PC-3 (cell line): ENCODE measurements at regions of chr4 and their contacts with region 1.

Region 1: GRCh38 chr4:168585168-168586091 is 88.6 kb downstream of the PALLD start:
- DNase-seq: peak; percentile 82
- ATAC-seq: peak; percentile 39
- H3K4me3 ChIP-seq: no peak overlapping the region
- H3K27ac ChIP-seq: peak overlapping the region; percentile 100
- H3K4me1 ChIP-seq: peaks cover 70% of the 10 kb centered on the region
- H3K27me3 ChIP-seq: no peaks in the 10 kb centered on the region
- CTCF ChIP-seq: peak; percentile 72

Region 2: DNA sequence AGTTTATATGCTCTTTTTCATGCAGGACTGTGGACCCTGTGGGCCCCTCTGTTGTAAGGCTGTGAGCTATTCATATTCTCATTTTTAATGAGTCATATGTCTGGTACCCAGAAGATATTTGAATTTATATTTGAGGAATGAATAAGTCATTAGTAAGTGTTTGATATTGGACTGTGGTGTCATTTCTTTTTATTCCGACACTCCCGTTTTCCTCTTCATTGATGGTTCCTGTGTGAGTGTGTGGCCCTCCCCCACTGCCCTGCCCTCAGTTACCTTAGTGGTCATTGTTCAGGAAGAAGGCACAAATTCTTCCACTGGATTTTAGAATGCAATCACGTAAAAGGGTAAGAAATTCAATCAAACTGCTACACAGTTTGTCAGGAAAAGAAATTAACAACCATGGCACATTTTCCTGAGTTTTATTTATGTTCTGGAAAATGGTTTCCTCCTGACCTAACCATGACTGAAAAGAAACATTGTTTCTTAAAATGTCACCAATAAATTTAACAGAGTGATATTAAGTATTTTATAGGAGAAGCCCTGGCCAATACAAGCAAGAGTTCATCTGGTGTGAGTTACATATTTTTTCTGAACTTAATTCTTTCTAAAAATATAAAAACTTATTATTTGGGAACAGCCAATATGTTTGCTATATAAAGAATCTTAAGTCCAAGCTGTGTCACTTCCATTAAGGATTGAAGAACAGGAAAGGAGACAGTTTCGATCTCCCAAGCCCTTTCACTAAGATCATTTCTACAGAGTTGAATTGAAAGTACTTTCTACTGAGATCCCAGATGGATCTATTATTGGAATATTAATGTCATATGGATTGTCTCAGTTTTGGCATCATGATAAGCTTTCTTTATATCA is 863.6 kb before region 1 on chr4:
- CTCF ChIA-PET with region 1: no interaction called
- POLR2A ChIA-PET with region 1: no interaction called
- intact Hi-C with region 1: no loop called
- DNase-seq: peak; percentile 64
- ATAC-seq: peak; percentile 95
- H3K4me3 ChIP-seq: no peak overlapping the region
- H3K27ac ChIP-seq: peak overlapping the region; percentile 49
- H3K4me1 ChIP-seq: peaks cover 17% of the 10 kb centered on the region
- H3K27me3 ChIP-seq: no peaks in the 10 kb centered on the region
- CTCF ChIP-seq: no peak

Region 3: GRCh38 chr4:168480931-168481611 is 104.4 kb before region 1 on chr4:
- CTCF ChIA-PET with region 1: no interaction called
- POLR2A ChIA-PET with region 1: interaction called, 3 read pairs
- intact Hi-C with region 1: loop called (anchors 2 kb)
- DNase-seq: peak; percentile 82
- ATAC-seq: peak; percentile 27
- H3K4me3 ChIP-seq: peak overlapping the region; percentile 89
- H3K27ac ChIP-seq: peak overlapping the region; percentile 94
- H3K4me1 ChIP-seq: peaks cover 54% of the 10 kb centered on the region
- H3K27me3 ChIP-seq: no peaks in the 10 kb centered on the region
- CTCF ChIP-seq: no peak

Region 4: DNA sequence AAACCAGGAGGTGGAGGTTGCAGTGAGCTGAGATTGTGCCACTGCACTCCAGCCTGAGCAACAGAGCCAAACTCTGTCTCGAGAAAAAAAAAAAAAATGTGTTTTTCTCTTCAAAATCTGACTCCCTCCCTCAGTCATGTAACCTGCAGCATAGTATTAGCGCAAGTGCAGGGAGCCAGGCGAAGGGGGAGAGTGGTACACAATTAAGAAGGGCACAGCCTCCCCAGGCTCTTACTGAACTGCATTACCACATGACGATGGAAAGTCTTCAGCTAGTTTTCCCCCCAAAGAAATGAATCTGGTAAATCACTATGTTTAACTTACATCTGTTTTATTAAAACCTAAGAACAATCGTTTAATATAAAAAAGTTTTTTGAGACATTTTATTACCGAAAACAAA is 56.2 kb before region 1 on chr4:
- CTCF ChIA-PET with region 1: no interaction called
- POLR2A ChIA-PET with region 1: no interaction called
- intact Hi-C with region 1: no loop called
- DNase-seq: no peak
- ATAC-seq: no peak
- H3K4me3 ChIP-seq: no peak overlapping the region
- H3K27ac ChIP-seq: no peak overlapping the region
- H3K4me1 ChIP-seq: peaks cover 18% of the 10 kb centered on the region
- H3K27me3 ChIP-seq: no peaks in the 10 kb centered on the region
- CTCF ChIP-seq: no peak

Region 5: DNA sequence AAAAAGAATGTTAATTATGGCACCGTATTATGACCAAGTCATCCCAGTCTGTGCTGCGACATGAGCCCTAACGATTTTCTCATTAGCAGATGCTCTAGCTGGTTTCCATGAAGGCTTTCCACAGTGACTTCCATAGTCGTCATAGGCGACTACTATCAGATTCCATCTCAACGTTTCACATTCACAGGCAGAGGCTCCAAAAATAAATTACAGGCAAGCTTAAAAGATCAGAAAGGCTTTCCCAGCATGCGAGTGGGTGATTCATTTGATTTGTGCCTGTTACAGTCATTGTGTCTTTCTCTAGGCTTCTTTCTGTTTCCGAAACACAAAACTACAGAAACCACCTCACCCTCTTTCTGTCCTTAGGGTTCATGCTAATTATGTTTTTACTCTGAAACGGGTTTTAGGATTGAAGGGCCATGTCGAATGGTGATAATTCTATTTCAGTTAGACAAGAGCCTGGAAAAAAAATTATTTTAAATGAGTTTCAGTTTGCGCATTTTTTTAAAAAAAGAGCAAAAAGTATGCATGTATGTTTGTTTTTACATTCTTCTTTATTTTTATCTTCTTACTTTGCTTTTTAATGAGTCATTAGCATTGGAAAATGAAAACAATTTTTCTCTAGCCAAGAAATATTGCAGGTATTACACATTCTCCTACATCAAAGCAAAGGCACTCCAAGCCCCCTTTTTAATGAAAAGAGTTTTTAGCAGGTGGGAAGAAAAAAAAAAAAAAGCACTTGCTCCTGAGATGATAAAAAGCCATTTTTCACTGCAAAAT is 45.2 kb before region 1 on chr4:
- CTCF ChIA-PET with region 1: no interaction called
- POLR2A ChIA-PET with region 1: no interaction called
- intact Hi-C with region 1: loop called (anchors 5 kb)
- DNase-seq: no peak
- ATAC-seq: no peak
- H3K4me3 ChIP-seq: 0 out of 2 replicates have a peak overlapping the region, but pooled peaks have one; percentile 10
- H3K27ac ChIP-seq: peak overlapping the region; percentile 84
- H3K4me1 ChIP-seq: peaks cover 52% of the 10 kb centered on the region
- H3K27me3 ChIP-seq: no peaks in the 10 kb centered on the region
- CTCF ChIP-seq: no peak

Region 6: DNA sequence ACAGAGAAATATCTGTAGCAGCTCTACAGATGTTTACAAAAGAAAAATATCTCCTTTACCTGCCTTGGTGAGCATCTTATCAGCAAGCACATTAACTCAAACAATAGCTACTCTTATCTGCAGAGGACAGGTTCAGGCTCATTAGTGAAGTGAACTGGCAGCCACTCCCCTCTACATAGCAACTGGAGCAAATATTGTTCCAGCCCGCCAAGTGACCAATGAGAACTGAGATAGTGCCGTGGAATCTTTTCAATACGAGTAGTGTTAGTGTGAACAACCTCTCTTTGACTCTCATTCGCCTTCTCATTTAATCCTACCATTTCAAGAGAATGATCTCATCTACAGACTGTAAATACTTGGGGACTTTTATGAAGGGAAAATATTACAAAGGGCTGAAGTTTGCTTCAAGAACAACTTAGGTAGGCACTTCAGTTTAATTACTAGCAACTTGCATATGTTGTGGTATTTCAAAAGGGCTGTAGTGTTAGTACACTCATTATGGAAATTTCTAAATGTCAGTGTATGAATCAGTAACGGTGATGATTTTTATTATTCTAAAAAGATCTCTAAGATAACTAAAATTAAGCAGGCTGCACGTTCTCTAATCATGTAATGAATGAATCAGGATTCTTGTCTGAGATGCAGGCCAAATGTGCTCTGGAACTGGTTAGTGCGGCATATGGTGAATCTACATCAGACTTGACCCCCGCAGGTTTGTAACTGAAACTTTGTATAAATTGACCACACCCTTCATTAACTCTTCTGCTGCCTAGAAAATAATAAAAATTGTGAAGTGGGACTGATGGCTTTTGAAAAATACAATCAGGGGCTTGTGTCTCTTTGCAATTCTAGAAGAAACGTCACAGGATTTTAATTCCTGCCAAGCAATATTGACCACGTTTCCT is 16.1 kb before region 1 on chr4:
- CTCF ChIA-PET with region 1: no interaction called
- POLR2A ChIA-PET with region 1: no interaction called
- intact Hi-C with region 1: no loop called
- DNase-seq: no peak
- ATAC-seq: peak; percentile 24; the same call in 1 of the 2 replicates
- H3K4me3 ChIP-seq: peak overlapping the region; percentile 17
- H3K27ac ChIP-seq: peak overlapping the region; percentile 11; the same call in 1 of the 2 replicates
- H3K4me1 ChIP-seq: peaks cover 30% of the 10 kb centered on the region
- H3K27me3 ChIP-seq: no peaks in the 10 kb centered on the region
- CTCF ChIP-seq: no peak

Region 7: DNA sequence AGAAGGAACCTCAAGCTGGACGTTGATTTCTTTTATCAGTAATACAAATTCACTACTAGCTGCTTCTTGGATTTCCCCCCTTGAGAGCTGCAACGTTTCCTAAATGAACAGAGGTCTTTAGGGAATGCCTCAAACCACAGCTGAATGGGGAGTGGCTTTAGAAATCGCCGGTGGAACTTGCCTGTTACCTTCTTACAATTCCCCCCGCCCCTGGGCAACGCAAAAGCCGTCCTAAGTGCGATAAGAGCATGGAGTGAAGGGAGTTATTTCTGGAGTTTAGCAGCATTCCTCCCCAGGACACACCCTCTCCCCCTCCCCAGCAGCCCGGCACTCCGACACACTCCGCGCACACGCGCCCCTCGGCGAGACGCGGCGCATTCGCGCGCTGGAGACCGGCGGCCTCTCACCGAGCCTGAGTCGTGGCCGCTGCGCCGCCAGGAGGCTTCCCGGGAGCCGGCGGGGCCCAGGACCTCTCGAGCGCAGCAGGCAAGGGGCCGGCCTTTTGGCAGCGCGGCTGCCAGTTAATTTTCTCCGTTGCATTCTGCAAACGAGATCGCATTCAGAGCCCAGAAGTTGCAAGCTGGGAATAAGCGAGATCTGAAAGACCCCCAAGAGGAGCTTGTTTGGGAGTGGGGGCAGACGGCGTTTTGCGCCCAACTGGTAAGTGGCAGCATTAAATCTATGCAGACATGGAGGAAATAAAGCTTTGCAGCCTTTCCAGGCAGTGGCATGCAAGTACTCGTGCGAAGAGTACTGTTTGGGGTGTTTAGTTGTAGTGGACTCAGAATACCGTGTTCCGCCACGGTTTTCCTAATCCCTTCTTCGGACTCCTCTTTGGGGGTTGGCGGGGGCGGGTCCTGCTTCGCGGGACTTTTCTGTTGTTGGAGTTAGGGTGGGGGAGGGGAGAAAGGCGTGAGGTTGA is 46.1 kb after region 1 on chr4:
- CTCF ChIA-PET with region 1: interaction called, 3 read pairs
- POLR2A ChIA-PET with region 1: interaction called, 4 read pairs
- intact Hi-C with region 1: loop called (anchors 1 kb)
- DNase-seq: peak; percentile 69
- ATAC-seq: peak; percentile 76
- H3K4me3 ChIP-seq: peak overlapping the region; percentile 93
- H3K27ac ChIP-seq: peak overlapping the region; percentile 95
- H3K4me1 ChIP-seq: peaks cover 48% of the 10 kb centered on the region
- H3K27me3 ChIP-seq: no peaks in the 10 kb centered on the region
- CTCF ChIP-seq: peak; percentile 42; the same call in 1 of the 2 replicates

Region 8: DNA sequence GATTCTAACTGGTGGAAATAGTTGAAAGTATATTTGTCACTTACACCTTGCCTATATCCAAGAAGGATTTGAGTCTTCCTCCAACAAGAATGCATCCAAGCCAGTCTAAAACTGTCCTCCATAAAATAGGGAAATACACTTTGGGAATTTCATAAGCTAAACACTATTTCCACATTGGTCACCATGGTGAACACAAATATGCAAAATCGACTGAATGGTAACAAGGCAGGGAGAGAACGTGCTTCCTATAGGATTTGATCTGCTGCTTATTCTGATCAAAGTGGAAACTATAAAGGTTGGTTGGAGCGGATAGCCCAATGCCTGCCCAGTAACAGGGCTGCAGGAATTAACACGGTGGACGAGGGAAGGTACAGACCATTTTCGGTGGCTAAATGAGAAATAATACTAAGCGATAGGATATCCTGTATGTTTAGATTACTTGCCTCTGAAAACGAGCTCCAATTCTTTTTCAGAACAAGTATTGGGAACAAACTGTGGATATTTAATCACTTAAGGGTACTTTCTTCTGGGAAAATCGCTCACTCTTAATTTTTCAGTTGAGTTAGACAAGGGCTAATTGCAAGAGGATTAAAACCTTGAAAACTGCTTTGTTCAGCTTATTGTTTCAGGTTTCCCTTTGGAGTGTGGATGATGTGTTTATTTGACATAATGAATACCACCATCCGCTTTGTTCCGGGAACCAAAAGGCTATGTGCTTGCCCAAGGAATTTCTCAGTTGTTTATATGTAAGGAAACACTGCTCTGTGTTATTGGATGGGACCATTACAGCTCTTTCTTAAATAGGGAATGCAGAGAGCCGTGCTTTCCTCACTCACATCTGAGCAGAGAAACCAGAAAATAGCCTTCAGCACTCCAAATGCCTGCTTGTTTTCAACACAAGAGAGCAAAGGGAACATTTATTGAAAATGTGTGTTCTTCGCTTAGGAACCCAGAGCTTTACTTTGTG is 230.2 kb after region 1 on chr4:
- CTCF ChIA-PET with region 1: no interaction called
- POLR2A ChIA-PET with region 1: no interaction called
- intact Hi-C with region 1: loop called (anchors 5 kb)
- DNase-seq: no peak
- ATAC-seq: no peak
- H3K4me3 ChIP-seq: no peak overlapping the region
- H3K27ac ChIP-seq: no peak overlapping the region
- H3K4me1 ChIP-seq: peaks cover 11% of the 10 kb centered on the region
- H3K27me3 ChIP-seq: no peaks in the 10 kb centered on the region
- CTCF ChIP-seq: no peak

Region 9: GRCh38 chr4:168917138-168917779 is 331.8 kb after region 1 on chr4:
- CTCF ChIA-PET with region 1: interaction called, 7 read pairs
- POLR2A ChIA-PET with region 1: no interaction called
- intact Hi-C with region 1: loop called (anchors 1 kb)
- DNase-seq: peak; percentile 65
- ATAC-seq: peak; percentile 38; the same call in 1 of the 2 replicates
- H3K4me3 ChIP-seq: no peak overlapping the region
- H3K27ac ChIP-seq: no peak overlapping the region
- H3K4me1 ChIP-seq: no peaks in the 10 kb centered on the region
- H3K27me3 ChIP-seq: no peaks in the 10 kb centered on the region
- CTCF ChIP-seq: peak; percentile 56